PC-9 (cell line): ENCODE measurements at regions of chr18 and their contacts with region 1.

Region 1: GRCh38 chr18:22800551-22800951 is 132.6 kb upstream of the RBBP8 start:
- DNase-seq: no peak
- H3K4me3 ChIP-seq: no peak overlapping the region
- H3K27ac ChIP-seq: no peak overlapping the region
- H3K4me1 ChIP-seq: no peaks in the 10 kb centered on the region
- H3K27me3 ChIP-seq: no peaks in the 10 kb centered on the region
- CTCF ChIP-seq: no peak

Region 2: GRCh38 chr18:22570492-22570891 is 230.1 kb before region 1 on chr18:
- CTCF ChIA-PET with region 1: no interaction called
- POLR2A ChIA-PET with region 1: no interaction called
- intact Hi-C with region 1: loop called (anchors 5 kb)
- DNase-seq: no peak
- H3K4me3 ChIP-seq: no peak overlapping the region
- H3K27ac ChIP-seq: no peak overlapping the region
- H3K4me1 ChIP-seq: no peaks in the 10 kb centered on the region
- H3K27me3 ChIP-seq: no peaks in the 10 kb centered on the region
- CTCF ChIP-seq: no peak

Region 3: GRCh38 chr18:22742409-22742808 is 58.1 kb before region 1 on chr18:
- CTCF ChIA-PET with region 1: no interaction called
- POLR2A ChIA-PET with region 1: no interaction called
- intact Hi-C with region 1: no loop called
- DNase-seq: no peak
- H3K4me3 ChIP-seq: no peak overlapping the region
- H3K27ac ChIP-seq: no peak overlapping the region
- H3K4me1 ChIP-seq: no peaks in the 10 kb centered on the region
- H3K27me3 ChIP-seq: no peaks in the 10 kb centered on the region
- CTCF ChIP-seq: no peak